Posterior vena cava (tissue), 2 donors: ENCODE measurements at regions of chr18 and their contacts with region 1.

Region 1: DNA sequence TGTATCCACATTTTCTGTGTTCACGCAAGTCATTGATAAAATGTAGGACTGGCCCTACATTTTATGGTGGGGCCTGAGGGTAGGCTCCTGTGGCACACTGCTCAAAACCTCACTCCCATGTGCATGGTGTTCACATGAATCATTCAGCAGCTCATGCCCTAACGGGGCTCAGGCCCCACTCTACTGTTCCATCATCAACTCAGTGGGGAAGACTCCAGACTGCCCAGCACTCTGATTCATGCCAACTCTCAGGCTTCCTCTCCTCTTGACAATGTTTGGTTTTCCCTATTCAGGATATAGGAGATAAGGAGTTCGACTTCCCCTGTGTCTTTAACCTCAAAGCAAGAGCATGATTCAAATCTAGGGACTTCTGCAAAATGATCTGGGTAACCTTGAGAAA is 92.0 kb upstream of the BOD1L2 start:
- DNase-seq: no peak

Region 2: DNA sequence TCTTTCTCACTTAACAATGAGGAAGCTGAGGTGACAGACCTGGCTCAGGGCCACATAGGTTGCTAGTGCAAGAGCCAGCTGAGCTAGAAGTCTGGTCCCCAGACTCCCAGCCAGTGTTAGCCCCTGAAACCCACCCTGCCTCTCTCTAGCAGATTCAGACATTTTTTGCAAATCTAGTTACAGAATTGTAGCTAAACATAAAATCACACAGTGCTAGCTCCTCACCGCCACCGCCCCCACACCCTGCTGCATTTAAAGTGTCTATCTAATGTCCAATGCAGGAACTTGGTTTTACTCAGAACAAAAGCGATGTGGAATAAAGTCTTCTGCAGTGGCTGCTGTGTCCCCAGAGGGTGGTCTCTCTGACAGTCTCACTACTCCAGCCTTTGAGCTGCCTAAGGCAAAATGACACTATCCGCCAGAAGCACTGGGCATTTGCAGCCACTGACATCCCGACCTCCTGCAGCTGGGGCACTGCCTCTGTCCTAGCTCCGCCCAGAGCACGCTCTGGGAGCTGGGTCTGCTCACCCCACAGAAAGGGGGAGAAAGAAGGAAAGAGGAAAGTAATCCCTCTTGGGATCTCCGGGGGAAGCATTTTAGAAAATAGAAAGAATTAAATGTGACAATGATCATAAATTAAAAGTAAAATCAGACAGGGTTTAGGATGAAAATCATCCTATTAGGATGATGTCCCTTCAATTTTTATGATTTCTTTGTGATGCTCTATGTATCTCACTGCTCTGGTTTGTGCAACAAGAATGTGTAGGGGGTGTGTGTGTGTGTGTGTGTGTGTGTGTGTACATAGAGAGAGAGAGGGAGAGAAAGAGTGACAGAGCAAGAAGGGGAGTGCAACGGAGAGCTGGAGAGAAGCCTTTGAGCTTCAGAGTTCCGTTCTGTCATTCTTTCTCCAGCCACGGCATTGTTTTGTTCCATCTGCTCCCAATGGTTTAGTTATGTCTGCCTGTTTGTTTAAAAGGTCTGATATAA is 247.0 kb after region 1 on chr18:
- intact Hi-C with region 1: loop called in 1 of 2 experiments (anchors 2 kb)
- DNase-seq: no peak